ENCODE measurements at regions of chr3 and their contacts with region 1.

Region 1: GRCh38 chr3:165378761-165379160 is 182.6 kb upstream of the SLITRK3 start:
- DNase-seq: no peak
- ATAC-seq: no peak

Region 2: GRCh38 chr3:163587342-163587741 is 1791.4 kb before region 1 on chr3:
- intact Hi-C with region 1: loop called (anchors 10 kb)
- DNase-seq: no peak
- ATAC-seq: no peak

Region 3: DNA sequence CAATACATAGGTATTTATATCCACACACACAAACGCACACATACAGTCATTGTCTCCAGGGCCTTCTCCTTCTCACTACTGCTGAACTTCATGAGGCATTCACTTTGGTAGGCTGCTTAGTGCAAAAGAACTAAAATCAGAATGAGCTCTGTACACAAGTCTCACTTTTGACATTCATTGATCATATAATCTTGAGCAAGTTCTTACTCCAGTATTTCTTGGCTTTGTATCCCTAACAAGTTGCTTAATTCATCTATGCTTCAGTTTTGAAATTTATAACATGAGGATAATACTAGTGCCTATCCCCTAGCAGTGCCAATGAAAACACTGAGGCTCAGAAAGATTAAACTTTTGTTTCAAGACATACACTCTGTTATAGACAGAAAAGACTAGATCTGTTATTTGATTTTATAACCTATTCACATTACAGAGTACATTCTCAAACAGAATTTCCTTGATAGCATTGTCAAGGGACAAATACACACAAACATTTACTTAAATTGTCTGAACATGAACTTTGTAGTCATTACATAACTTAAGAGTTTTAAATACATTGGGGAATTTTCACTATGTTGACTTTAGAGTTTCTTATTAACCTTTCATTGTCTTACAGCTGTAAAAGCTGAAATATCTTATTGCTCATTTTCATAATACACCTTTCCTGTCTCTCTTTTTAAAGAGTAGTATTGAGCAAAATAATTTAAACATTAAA is 245.4 kb before region 1 on chr3:
- intact Hi-C with region 1: no loop called
- DNase-seq: no peak
- ATAC-seq: no peak